Calu3 (cell line): ENCODE measurements at regions of chr3 and their contacts with region 1.

Region 1: DNA sequence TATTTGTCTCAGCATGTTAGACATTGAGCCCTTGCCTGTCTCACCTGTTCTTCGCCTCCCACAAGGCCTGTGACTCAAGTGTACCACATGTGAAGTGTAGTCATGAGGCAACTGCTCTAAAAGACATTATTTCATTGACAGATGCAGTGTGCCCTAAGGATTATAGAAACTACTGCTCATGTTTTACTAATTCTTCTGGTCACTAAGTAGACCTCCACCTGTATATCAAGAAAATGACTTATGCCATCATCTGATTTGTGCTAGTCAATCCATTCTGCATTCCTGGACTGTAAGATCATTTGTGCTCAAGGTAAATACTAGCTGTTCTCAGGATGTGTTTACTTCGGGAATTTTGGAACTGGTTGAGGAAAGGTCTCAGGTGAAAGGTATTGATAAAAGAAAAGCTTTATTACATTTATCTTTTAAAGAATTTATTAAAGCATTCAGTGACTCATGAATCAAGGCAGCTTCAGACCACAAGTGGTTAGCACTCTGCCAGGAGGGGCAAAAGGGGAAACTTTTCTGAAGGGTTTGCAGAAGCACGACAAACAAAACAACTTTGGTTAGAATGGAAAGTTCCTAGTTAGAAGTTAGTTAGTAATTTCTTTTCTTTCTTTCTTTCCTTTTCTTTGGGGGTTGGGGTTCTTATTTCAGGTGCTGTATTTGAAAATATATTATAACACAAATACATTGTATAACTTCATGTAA is 465.3 kb upstream of the CBLB start:
- DNase-seq: peak; percentile 51
- H3K4me3 Mint-ChIP-seq: peak overlapping the region; percentile 60
- H3K27ac Mint-ChIP-seq: peak overlapping the region; percentile 95
- H3K4me1 Mint-ChIP-seq: peaks cover 43% of the 10 kb centered on the region
- H3K27me3 Mint-ChIP-seq: no peaks in the 10 kb centered on the region
- CTCF ChIP-seq: no peak

Region 2: GRCh38 chr3:105868742-105869530 is 465.1 kb before region 1 on chr3 and contains the start of gene CBLB:
- CTCF ChIA-PET with region 1: no interaction called
- intact Hi-C with region 1: loop called (anchors 5 kb)
- DNase-seq: peak; percentile 84
- H3K4me3 Mint-ChIP-seq: peak within 1 kb of the TSS; percentile 92
- H3K27ac Mint-ChIP-seq: peak within 1 kb of the TSS; percentile 86
- H3K4me1 Mint-ChIP-seq: peaks cover 19% of the 10 kb centered on the region
- H3K27me3 Mint-ChIP-seq: no peaks in the 10 kb centered on the region
- CTCF ChIP-seq: no peak
- total RNA-seq, gene CBLB: 17.9 and 26.2 TPM in 2 replicates

Region 3: DNA sequence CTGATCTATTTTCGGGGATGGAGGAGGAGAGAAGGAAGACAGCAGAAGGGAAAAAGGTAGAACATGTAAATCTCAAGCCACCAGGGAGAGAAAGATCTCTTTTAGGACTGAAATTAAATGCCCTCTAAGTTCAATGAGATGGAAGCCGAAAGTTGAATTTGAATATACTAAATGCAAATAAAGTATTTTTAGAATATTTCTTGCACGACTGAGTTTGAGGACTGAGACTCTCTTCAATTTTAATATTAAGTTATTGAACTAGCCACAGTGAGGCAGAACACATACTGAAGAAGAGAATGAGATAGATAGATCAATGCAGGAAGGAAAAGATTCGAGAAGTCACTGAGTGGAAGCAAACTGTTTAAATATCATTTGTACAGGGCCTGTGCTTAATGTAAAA is 65.4 kb before region 1 on chr3:
- CTCF ChIA-PET with region 1: no interaction called
- intact Hi-C with region 1: no loop called
- DNase-seq: no peak
- H3K4me3 Mint-ChIP-seq: no peak overlapping the region
- H3K27ac Mint-ChIP-seq: no peak overlapping the region
- H3K4me1 Mint-ChIP-seq: peaks cover 5% of the 10 kb centered on the region
- H3K27me3 Mint-ChIP-seq: no peaks in the 10 kb centered on the region
- CTCF ChIP-seq: no peak

Region 4: GRCh38 chr3:106440672-106441071 is 106.6 kb after region 1 on chr3:
- CTCF ChIA-PET with region 1: no interaction called
- intact Hi-C with region 1: loop called (anchors 5 kb)
- DNase-seq: peak; percentile 3
- H3K4me3 Mint-ChIP-seq: no peak overlapping the region
- H3K27ac Mint-ChIP-seq: no peak overlapping the region
- H3K4me1 Mint-ChIP-seq: peaks cover 9% of the 10 kb centered on the region
- H3K27me3 Mint-ChIP-seq: no peaks in the 10 kb centered on the region
- CTCF ChIP-seq: no peak

Region 5: DNA sequence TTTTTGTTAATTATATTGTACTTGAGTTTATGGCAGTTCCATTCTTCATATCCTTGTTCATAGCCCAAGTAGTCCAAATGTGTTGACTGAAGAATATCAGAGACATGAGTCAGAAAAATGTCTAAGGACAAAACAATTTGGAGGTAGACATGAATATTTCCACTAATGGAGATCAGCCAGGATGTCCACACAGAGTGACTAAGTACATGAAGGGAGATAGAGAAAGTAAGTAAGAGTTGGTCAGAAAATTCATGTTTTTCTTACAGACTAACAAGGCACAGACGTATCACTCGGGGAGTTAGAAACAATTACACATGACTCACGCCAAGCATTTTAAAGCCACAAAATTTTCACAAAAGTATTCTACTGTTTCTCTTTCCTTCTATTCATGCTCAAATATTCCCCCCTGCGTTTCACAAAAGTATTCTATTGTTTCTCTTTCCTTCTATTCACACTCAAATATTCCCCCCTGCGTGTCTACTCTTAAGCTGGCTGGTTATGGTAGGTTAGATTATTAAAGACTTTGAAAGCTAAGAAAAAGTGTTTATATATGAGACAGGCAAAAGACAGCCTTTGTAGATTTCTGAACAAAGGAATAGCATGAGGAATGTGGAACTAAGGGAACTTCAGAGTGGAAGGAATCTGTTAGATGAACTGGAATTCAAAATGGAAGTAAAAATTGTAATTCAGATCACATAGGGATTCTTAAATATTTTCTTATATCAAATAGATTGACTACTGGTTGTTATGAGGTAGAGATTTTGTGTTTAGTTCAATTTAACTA is 394.4 kb after region 1 on chr3:
- CTCF ChIA-PET with region 1: no interaction called
- intact Hi-C with region 1: loop called (anchors 10 kb)
- DNase-seq: peak; percentile 28
- H3K4me3 Mint-ChIP-seq: peak overlapping the region; percentile 40
- H3K27ac Mint-ChIP-seq: peak overlapping the region; percentile 85
- H3K4me1 Mint-ChIP-seq: peaks cover 48% of the 10 kb centered on the region
- H3K27me3 Mint-ChIP-seq: no peaks in the 10 kb centered on the region
- CTCF ChIP-seq: no peak

Region 6: GRCh38 chr3:107184375-107184774 is 850.3 kb after region 1 on chr3:
- CTCF ChIA-PET with region 1: no interaction called
- intact Hi-C with region 1: no loop called
- DNase-seq: no peak
- H3K4me3 Mint-ChIP-seq: no peak overlapping the region
- H3K27ac Mint-ChIP-seq: no peak overlapping the region
- H3K4me1 Mint-ChIP-seq: no peaks in the 10 kb centered on the region
- H3K27me3 Mint-ChIP-seq: no peaks in the 10 kb centered on the region
- CTCF ChIP-seq: no peak